Activated naive CD4-positive, alpha-beta T cell treated with anti-CD3 and anti-CD28 coated beads for 36 hours (primary cell): ENCODE measurements at regions of chr1 and their contacts with region 1.

Region 1: DNA sequence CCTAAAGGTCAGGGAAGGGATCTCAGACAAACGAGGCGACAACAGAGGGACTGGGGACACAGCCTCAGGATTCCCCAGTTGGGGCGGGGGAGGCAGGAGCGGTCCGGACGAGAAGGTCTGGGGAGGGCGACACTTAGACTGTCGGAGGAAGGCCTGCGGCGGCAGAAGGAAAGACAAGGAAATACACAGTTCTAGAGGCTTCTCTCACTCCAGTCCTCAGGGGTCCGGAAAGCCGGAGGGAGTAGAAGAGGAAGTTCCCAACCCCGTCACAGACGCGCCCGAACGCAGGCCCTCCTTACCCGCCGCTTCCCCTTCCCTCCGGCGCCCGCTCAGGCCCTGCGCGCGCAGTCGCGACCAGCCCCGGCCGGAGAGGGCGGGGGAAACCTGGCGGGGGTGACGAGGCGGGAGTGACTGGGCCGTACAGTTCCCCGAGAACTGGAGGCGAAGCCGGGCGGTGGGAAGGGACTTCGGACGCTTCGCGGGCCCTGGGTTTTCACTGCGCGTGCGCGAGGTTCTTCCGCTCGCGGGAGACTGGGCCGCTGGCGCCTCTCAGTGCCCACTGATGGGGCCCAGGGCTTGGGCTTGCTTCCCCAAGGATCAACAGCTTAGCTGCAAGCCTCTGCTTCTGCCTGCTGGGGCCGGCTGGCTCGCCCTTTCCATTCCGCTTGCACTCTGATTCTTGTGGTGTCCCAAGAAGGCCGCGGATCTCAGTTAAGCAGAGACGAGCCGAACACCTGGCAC is at the start of gene IPP:
- DNase-seq: peak; percentile 96
- H3K4me3 Mint-ChIP-seq: peak within 1 kb of the TSS; percentile 95
- H3K27ac Mint-ChIP-seq: peak within 1 kb of the TSS; percentile 97
- H3K4me1 Mint-ChIP-seq: peaks cover 31% of the 10 kb centered on the region
- H3K27me3 Mint-ChIP-seq: no peaks in the 10 kb centered on the region
- total RNA-seq, gene IPP: 19.1 to 20.2 TPM

Region 2: GRCh38 chr1:45339789-45340570 is 410.5 kb before region 1 on chr1 and contains the starts of genes MUTYH and TOE1:
- CTCF ChIA-PET with region 1: no interaction called
- intact Hi-C with region 1: loop called (anchors 1 kb)
- DNase-seq: peak; percentile 95
- H3K4me3 Mint-ChIP-seq: peak within 1 kb of the TSS; percentile 100
- H3K27ac Mint-ChIP-seq: peak within 1 kb of the TSS; percentile 100
- H3K4me1 Mint-ChIP-seq: peaks cover 35% of the 10 kb centered on the region
- H3K27me3 Mint-ChIP-seq: no peaks in the 10 kb centered on the region
- total RNA-seq, gene MUTYH: 42.0 to 45.0 TPM
- total RNA-seq, gene TOE1: 23.0 to 23.8 TPM

Region 3: DNA sequence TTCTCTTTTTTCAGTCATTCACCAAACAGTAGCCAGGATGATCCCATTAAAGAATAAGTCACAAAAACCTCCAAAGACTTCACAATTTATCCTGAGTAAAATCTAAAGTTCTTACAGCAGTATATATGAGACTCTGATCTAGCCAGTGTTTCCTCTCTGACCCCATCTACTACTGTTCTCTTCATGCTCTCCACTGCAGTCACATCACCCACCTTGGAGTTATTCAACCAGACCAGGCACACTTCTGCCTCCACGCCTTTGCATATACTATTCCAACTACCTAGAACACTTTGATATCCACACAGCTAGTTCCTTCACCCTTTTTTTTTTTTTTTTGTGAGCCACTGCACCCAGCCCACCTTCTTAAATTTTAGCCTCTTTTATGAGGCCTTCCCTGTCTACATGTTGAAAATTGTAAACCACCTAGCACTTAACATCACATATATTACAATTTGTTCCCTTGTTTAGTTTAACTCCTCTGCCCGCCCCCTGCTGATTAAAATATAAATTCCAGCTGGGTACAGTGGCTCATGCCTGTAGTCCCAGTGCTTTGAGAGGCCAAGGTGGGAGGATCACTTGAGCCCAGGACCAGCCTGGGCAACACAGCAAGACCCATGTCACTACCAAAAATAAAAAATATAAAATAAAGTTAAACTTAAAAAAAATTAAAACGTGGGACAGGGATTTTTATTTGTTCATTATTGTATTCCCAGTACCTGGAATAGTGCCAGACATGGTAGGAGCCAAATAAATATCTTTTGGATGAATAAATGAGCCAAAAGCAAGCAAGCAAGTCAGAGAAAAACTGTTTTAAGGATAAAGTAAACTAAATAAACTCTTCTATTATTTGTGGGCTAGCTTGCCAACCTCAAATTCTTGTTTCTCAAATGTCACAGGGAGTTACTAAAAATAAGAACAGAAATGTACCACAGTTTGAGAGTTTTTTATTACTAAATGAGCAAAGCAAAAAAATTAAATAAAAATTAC is 375.1 kb before region 1 on chr1:
- CTCF ChIA-PET with region 1: no interaction called
- intact Hi-C with region 1: no loop called
- DNase-seq: no peak
- H3K4me3 Mint-ChIP-seq: no peak overlapping the region
- H3K27ac Mint-ChIP-seq: no peak overlapping the region
- H3K4me1 Mint-ChIP-seq: no peaks in the 10 kb centered on the region
- H3K27me3 Mint-ChIP-seq: no peaks in the 10 kb centered on the region

Region 4: GRCh38 chr1:45769261-45769932 is 18.9 kb after region 1 on chr1:
- CTCF ChIA-PET with region 1: no interaction called
- intact Hi-C with region 1: no loop called
- DNase-seq: no peak
- H3K4me3 Mint-ChIP-seq: no peak overlapping the region
- H3K27ac Mint-ChIP-seq: no peak overlapping the region
- H3K4me1 Mint-ChIP-seq: no peaks in the 10 kb centered on the region
- H3K27me3 Mint-ChIP-seq: no peaks in the 10 kb centered on the region

Region 5: GRCh38 chr1:45803301-45803780 is 52.9 kb after region 1 on chr1 and contains the start of gene MAST2:
- CTCF ChIA-PET with region 1: no interaction called
- intact Hi-C with region 1: loop called (anchors 1 kb)
- DNase-seq: peak; percentile 84
- H3K4me3 Mint-ChIP-seq: peak within 1 kb of the TSS; percentile 86
- H3K27ac Mint-ChIP-seq: peak within 1 kb of the TSS; percentile 74
- H3K4me1 Mint-ChIP-seq: peaks cover 27% of the 10 kb centered on the region
- H3K27me3 Mint-ChIP-seq: no peaks in the 10 kb centered on the region
- total RNA-seq, gene MAST2: 21.7 to 22.1 TPM

Region 6: GRCh38 chr1:46179138-46180081 is 428.9 kb after region 1 on chr1:
- CTCF ChIA-PET with region 1: no interaction called
- intact Hi-C with region 1: loop called (anchors 10 kb)
- DNase-seq: peak; percentile 82
- H3K4me3 Mint-ChIP-seq: no peak overlapping the region
- H3K27ac Mint-ChIP-seq: no peak overlapping the region
- H3K4me1 Mint-ChIP-seq: peaks cover 8% of the 10 kb centered on the region
- H3K27me3 Mint-ChIP-seq: no peaks in the 10 kb centered on the region